ENCODE measurements at regions of chr15 and their contacts with region 1.

Region 1: DNA sequence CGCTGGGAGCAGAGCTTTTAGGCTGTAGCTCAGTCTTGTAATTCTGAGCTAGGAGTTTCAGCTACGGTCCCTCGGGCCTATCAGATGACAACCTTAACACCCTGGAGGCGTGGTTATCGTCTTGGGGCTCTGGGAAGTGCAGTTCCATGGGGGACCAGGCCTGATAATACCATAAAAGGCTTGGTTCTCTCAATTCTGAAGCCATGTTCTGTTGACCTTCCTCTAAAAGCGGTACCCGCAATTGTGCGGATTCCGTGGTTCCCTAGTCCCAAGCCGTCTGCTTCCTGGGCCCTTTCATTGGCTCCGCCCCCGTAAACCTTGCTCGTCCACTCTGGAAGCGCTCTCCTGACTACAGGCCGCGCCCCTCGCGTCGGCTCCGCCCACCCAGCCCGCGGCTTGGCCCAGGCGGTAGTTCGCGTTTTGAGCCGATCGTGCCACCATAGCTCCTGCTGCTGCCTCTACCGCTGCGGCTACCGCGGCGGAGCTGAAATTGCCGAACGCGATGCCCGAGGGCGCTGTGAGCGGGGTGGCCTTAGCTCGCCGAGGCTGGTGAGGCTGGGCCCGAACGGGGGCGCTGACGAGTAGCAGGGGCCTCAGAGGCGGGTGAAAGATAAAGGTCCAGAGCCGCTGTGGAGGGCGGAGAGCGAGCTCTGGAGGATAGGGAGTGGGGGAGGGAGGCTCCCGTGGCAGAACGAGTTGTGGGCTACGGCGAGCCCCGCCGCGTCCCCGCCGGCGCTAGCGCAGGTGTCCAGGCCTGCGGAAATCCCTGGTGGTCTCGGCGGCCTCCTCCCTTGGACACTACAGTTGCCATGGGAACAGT is at the start of gene MAPKBP1:
- DNase-seq: peak; percentile 97 to 98 (median 98)
- ATAC-seq: peak; percentile 97 to 98 (median 98)
- H3K4me3 ChIP-seq: peak within 1 kb of the TSS; percentile 70 to 87 (median 78)
- H3K27ac ChIP-seq: peak within 1 kb of the TSS; percentile 39 to 92 (median 86)
- H3K4me1 ChIP-seq: peaks cover 3 to 49% (median 31%) of the 10 kb centered on the region in 12 donors
- H3K27me3 ChIP-seq: no peaks in the 10 kb centered on the region
- CTCF ChIP-seq: peak; percentile 25 to 94 (median 64)
- POLR2A ChIP-seq: peak in 1 of 2 donors; percentile 58
- total RNA-seq, gene MAPKBP1: 12.0 to 20.5 (median 14.8) TPM

Region 2: GRCh38 chr15:41727143-41727542 is 47.1 kb before region 1 on chr15:
- intact Hi-C with region 1: no loop called
- DNase-seq: no peak
- ATAC-seq: peak in 3 of 4 donors; percentile 48 to 61 (median 59)
- H3K4me3 ChIP-seq: no peak overlapping the region
- H3K27ac ChIP-seq: peak overlapping the region in 3 of 12 donors; percentile 4 to 24 (median 11)
- H3K4me1 ChIP-seq: peaks cover 0 to 2% (median 0%) of the 10 kb centered on the region in 12 donors
- H3K27me3 ChIP-seq: no peaks in the 10 kb centered on the region
- CTCF ChIP-seq: no peak
- POLR2A ChIP-seq: no peak

Region 3: GRCh38 chr15:41806291-41807181 is 32.3 kb after region 1 on chr15:
- intact Hi-C with region 1: loop called (anchors 1 to 2 kb)
- DNase-seq: peak in 2 of 5 donors; percentile 48 to 73
- ATAC-seq: peak; percentile 55 to 80 (median 74)
- H3K4me3 ChIP-seq: no peak overlapping the region
- H3K27ac ChIP-seq: peak overlapping the region in 2 of 12 donors; percentile 0 to 27
- H3K4me1 ChIP-seq: peaks cover 0 to 26% (median 4%) of the 10 kb centered on the region in 12 donors
- H3K27me3 ChIP-seq: no peaks in the 10 kb centered on the region
- CTCF ChIP-seq: peak in 2 of 12 donors; percentile 20 to 30
- POLR2A ChIP-seq: no peak

Region 4: DNA sequence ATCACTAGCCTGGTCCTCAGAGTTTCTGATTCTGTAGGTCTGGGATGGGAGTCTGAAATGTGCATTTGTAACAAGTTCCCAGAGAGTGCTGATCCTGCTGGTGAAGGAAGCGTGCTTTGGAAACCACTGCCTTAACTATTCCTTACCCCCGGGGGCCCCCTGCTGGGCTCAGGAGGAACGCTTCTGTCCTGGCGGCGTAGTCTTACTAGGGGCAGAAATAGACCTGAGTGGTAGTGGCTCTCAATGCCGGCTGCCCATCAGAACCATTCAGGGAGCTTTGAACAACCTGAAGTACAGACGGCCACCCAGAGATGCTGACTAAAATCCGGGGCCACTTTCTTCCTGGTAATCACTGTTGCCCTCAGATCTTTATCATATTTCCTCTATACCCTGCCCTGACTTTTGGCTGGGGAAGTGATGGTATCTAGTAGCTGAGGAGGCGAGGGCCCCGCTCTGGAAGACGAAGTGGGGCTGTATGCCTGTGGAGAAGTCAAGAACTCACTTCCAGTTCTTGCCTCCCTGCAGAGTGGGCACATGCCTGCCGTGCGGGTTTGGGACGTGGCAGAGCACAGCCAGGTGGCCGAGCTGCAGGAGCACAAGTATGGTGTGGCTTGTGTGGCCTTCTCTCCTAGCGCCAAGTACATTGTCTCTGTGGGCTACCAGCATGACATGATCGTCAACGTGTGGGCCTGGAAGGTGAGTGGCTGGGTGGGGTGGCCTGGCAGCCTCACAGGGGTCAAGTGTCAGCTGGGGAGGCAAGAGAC is 37.3 kb after region 1 on chr15:
- intact Hi-C with region 1: loop called (anchors 1 to 2 kb)
- DNase-seq: peak; percentile 79 to 87 (median 86)
- ATAC-seq: peak; percentile 84 to 92 (median 91)
- H3K4me3 ChIP-seq: no peak overlapping the region
- H3K27ac ChIP-seq: no peak overlapping the region
- H3K4me1 ChIP-seq: peaks cover 0 to 12% (median 2%) of the 10 kb centered on the region in 12 donors
- H3K27me3 ChIP-seq: no peaks in the 10 kb centered on the region
- CTCF ChIP-seq: peak; percentile 77 to 95 (median 90)
- POLR2A ChIP-seq: no peak

Region 5: DNA sequence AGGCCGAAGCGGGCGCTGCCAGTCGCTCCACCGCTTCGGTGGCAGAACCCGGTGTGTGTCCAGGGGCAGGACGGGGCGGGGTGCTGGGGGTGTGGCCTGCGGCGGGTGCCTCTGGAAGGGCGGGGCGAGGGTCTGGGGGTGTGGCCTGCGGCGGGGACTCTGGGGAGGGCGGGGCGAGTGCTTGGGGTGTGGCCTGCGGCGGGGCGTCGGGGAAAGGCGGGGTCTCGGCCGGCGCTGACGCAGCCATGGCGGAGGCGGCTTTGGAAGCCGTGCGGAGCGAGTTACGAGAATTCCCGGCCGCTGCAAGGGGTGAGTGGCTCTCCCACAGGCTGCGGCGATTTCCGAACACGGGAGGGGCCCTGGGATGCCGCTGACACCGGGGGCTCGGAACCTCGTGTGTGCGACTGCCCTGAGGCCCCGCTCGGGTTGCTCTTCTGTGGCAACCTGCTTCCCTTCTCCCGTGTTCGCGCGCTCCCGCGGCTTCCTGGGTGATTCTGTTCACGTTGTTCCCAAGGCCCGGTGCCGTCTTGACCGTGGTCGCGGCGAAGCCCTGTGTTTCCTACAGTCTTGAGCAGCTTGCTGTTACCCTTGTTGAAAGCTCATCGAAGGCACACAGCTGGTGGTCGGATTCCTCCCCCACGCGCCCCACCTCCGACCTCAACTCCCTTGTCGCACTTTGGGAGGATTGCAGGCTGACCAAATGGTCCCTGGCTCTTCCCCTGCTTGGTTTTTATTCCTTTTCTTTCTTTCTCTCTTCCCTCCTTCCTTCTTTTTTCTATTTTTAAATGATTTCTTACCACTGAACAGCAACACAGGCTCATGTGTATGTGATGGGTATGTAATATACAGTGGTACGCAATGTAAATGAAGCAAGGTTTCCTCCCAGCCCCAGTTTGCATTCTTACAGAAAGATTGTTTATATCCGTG is 53.9 kb after region 1 on chr15 and contains the start of gene JMJD7:
- intact Hi-C with region 1: loop called in 1 of 10 experiments (anchors 5 kb)
- DNase-seq: peak; percentile 96 to 98 (median 96)
- ATAC-seq: peak; percentile 94 to 97 (median 96)
- H3K4me3 ChIP-seq: peak within 1 kb of the TSS; percentile 52 to 88 (median 76)
- H3K27ac ChIP-seq: peak within 1 kb of the TSS; percentile 22 to 89 (median 84)
- H3K4me1 ChIP-seq: peaks cover 0 to 26% (median 16%) of the 10 kb centered on the region in 12 donors
- H3K27me3 ChIP-seq: no peaks in the 10 kb centered on the region
- CTCF ChIP-seq: no peak
- POLR2A ChIP-seq: peak in 1 of 2 donors; percentile 85
- total RNA-seq, gene JMJD7: 5.4 to 17.9 (median 11.8) TPM

Region 6: DNA sequence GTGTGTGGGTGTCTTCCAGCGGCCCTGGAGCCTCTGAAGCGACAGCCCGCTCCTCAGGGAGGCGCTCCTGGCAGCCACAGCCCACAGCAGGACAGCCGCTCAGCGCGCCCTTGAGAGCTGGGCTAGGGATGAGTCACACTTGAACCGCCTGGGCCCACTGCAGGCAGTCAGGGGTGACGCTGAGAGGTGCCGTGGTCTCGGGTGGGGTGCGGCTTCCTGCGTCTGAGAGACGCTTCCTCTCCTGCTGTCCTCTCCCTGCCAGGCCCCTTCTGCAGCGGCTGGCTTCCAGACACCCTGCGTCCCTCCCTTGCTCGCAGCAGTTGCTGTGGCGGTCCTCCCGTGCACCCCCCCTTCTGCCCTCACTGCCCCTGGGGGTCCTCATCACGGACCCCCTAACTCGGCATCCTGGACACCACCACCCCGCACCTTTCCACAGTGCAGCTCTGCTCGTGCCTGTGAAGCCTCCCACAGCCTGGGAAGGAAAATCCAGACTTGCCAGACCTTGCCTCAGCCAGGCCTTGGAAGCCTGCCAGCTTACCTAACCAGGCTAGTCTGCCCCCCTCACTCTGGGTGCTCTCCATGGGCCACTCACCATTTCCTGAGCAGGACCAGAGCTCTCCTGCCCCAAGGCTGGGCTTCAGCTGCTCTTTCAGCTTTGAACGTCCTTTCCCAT is 120.7 kb after region 1 on chr15:
- intact Hi-C with region 1: loop called in 5 of 10 experiments (anchors 5 to 10 kb)
- DNase-seq: peak; percentile 83 to 92 (median 90)
- ATAC-seq: peak; percentile 77 to 90 (median 85)
- H3K4me3 ChIP-seq: peak overlapping the region in 10 of 12 donors; percentile 20 to 67 (median 56)
- H3K27ac ChIP-seq: peak overlapping the region; percentile 18 to 96 (median 88)
- H3K4me1 ChIP-seq: peaks cover 9 to 35% (median 26%) of the 10 kb centered on the region in 12 donors
- H3K27me3 ChIP-seq: no peaks in the 10 kb centered on the region
- CTCF ChIP-seq: peak in 5 of 12 donors; percentile 19 to 48 (median 31)
- POLR2A ChIP-seq: no peak

Region 7: GRCh38 chr15:41904541-41905005 is 130.3 kb after region 1 on chr15:
- intact Hi-C with region 1: loop called in 7 of 10 experiments (anchors 2 to 10 kb)
- DNase-seq: peak in 4 of 5 donors; percentile 63 to 67 (median 65)
- ATAC-seq: peak; percentile 48 to 75 (median 64)
- H3K4me3 ChIP-seq: no peak overlapping the region
- H3K27ac ChIP-seq: peak overlapping the region in 9 of 12 donors; percentile 20 to 67 (median 42)
- H3K4me1 ChIP-seq: peaks cover 0 to 40% (median 21%) of the 10 kb centered on the region in 12 donors
- H3K27me3 ChIP-seq: no peaks in the 10 kb centered on the region
- CTCF ChIP-seq: peak; percentile 78 to 89 (median 83)
- POLR2A ChIP-seq: no peak